ENCODE measurements at regions of chr6 and their contacts with region 1.

Region 1: DNA sequence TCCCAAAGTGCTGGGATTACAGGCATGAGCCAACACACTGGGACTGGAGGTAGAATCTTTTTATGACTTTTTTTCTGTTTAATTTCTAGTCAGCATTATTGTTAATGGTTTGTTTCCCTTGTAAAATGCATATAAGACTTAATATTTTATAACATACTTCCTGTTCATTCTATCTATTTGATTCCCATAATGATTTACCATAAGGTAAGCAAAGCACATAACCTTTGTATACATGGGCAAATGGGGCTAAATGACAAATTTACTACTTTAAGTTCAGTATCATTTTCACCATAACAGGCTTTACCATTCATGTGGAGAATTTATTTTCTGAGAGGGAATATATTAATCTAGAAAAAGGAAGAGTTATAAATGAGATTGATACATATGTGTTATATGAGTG is 24.3 kb downstream of the VTA1 start:
- DNase-seq: no peak
- H3K4me3 ChIP-seq: no peak overlapping the region
- H3K27me3 ChIP-seq: no peaks in the 10 kb centered on the region
- CTCF ChIP-seq: no peak

Region 2: GRCh38 chr6:142121342-142121741 is 50.0 kb before region 1 on chr6:
- CTCF ChIA-PET with region 1: no interaction called
- POLR2A ChIA-PET with region 1: no interaction called
- DNase-seq: no peak
- H3K4me3 ChIP-seq: no peak overlapping the region
- H3K27me3 ChIP-seq: no peaks in the 10 kb centered on the region
- CTCF ChIP-seq: no peak

Region 3: DNA sequence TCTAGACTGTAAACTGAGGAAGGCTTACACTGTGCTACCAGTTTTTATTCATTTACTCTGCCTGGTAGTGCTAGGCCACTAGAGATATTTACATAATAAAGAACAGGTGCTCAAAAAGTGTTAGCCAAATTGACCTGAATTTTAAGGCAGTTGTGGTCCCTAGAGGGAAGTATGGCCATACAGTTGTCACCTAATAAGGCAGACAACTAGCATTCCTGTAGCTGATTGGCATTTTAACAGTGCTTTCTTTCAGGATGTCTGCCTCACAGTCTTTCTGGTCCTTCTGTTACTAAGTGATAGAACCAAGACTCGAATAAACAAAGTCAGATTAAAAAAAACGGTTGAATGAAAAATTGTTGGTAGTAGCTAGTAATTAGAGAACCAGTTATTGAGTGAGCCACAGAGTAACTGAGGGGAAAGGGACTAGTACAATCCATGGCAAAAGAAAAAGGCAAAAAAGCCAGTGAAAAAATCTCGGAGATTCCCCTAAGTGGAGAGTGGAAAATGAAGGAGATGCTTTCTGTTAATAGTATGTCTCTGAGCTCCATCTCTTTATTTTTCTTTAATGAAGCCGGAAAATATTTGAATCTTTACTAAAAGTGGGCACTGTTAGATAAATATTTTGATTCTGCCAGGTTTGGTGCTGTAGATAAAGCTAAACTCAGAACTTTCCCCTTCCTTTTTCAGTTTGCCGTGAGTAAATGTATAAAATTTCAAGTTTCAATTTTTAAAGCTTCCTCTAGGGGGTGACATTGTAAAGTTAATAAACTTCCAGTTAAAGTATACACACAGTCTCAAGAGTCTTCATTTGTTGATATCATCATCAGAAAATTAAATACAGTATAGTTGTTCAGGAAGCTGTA is 15.2 kb before region 1 on chr6:
- CTCF ChIA-PET with region 1: interaction called, 14 read pairs
- POLR2A ChIA-PET with region 1: no interaction called
- DNase-seq: no peak
- H3K4me3 ChIP-seq: no peak overlapping the region
- H3K27me3 ChIP-seq: no peaks in the 10 kb centered on the region
- CTCF ChIP-seq: peak; percentile 27

Region 4: DNA sequence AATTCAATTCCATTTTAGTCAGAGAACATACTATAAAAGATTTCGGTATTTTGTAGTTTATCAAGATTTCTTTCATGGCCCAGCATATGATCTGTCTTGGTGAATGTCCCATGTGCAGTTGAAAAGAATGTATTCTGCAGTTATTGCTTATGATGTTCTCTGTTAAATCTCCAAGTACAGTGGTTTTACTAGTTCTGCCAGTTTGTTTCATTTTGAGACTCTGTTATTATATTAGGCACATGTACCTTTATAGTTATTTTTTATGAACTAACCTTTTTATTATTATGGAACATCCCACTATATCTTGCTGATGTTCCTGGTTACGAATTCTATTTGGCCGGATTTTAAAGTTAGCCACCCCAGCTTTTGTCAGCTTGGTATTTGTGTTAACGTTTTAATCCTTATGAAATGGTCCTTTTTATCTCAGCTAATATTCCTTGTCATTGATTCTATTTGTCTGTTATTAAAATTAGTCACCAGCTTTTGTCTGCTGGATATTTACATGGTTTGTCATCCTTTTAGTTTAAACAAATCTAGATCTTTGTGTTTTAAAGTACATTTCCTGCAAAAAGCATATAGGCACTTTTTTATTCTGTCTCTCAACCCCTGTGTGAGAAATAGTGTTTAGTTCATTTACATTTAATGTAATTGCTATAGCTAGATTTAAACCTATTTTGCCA is 24.7 kb after region 1 on chr6:
- CTCF ChIA-PET with region 1: no interaction called
- POLR2A ChIA-PET with region 1: no interaction called
- DNase-seq: no peak
- H3K4me3 ChIP-seq: no peak overlapping the region
- H3K27me3 ChIP-seq: no peaks in the 10 kb centered on the region
- CTCF ChIP-seq: no peak